ENCODE measurements at regions of chrX and their contacts with region 1.

Region 1: DNA sequence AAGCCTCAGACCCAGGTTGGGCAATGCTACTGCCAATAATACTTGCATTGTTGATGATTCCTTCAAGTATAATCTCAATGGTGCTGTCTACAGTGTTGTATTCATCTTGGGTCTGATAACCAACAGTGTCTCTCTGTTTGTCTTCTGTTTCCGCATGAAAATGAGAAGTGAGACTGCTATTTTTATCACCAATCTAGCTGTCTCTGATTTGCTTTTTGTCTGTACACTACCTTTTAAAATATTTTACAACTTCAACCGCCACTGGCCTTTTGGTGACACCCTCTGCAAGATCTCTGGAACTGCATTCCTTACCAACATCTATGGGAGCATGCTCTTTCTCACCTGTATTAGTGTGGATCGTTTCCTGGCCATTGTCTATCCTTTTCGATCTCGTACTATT is 7.4 kb downstream of the LPAR4 start:
- DNase-seq: no peak
- ATAC-seq: no peak
- H3K4me3 ChIP-seq: no peak overlapping the region
- H3K4me3 Mint-ChIP-seq: no peak overlapping the region
- H3K27ac ChIP-seq: no peak overlapping the region
- H3K27ac Mint-ChIP-seq: no peak overlapping the region
- H3K4me1 ChIP-seq: no peaks in the 10 kb centered on the region
- H3K4me1 Mint-ChIP-seq: peaks cover 0 to 4% (median 0%) of the 10 kb centered on the region in 7 donors
- H3K27me3 ChIP-seq: no peaks in the 10 kb centered on the region
- H3K27me3 Mint-ChIP-seq: no peaks in the 10 kb centered on the region

Region 2: DNA sequence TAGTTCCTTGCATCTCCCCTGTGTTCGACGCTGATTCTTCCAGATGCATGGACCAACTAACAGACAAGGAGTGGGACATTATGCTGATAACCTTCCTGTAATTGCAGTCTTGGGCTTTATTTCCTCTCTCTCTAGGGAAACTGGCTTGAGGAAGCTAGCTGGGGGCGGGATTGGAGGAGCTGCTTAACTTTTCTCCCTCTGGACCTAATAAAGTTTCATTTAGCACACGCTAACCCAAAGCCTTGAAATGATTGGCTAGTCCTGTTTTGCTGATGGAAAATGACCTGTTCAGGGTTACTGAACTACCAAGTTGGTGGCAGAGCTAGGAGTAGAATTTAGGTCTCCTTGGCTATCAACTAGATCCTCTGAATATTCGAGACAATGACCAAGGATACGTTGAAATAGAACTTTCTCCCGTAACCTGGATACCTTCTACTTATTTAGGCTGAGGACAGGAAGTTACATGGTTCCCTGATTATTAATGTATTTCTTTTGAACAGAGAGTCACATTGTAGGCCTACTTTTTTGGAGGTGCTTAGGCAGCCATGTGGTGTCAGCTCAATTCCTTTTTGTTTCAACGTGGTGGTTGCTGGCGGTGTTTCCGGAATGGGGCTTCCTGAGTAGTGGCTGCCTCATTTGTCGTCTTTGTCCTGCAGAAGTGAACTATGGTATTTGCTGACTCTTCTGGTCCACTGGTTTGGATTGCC is 648.8 kb before region 1 on chrX:
- CTCF ChIA-PET with region 1: no interaction called
- POLR2A ChIA-PET with region 1: no interaction called
- intact Hi-C with region 1: no loop called
- DNase-seq: peak in 7 of 9 donors; percentile 15 to 45 (median 40)
- ATAC-seq: no peak
- H3K4me3 ChIP-seq: peak overlapping the region; percentile 98
- H3K4me3 Mint-ChIP-seq: peak overlapping the region; percentile 89 to 99 (median 92)
- H3K27ac ChIP-seq: peak overlapping the region; percentile 97
- H3K27ac Mint-ChIP-seq: peak overlapping the region; percentile 68 to 97 (median 93)
- H3K4me1 ChIP-seq: peaks cover 26 to 29% of the 10 kb centered on the region in 2 donors
- H3K4me1 Mint-ChIP-seq: peaks cover 21 to 69% (median 59%) of the 10 kb centered on the region in 7 donors
- H3K27me3 ChIP-seq: no peaks in the 10 kb centered on the region
- H3K27me3 Mint-ChIP-seq: no peaks in the 10 kb centered on the region

Region 3: DNA sequence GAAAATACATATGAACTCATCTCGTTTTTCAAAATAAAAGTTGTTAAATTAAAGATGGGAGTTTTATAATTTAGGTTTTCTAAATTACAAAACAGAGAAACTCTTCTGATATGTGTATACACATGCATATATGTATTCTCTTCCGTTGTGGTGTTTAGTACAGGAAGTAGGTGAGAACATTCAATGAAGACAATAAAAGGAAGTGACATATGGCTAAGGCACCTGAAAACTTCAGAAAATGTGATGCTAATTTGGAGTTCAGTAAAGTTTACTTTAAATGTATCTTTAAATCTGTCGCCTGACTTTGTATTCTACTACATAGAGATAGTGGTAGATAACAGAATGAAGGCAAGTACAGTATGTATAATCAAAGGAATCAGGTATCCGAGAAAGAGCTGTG is 645.7 kb after region 1 on chrX:
- CTCF ChIA-PET with region 1: no interaction called
- POLR2A ChIA-PET with region 1: no interaction called
- intact Hi-C with region 1: loop called in 1 of 2 experiments (anchors 10 kb)
- DNase-seq: peak in 5 of 9 donors; percentile 15 to 54 (median 48)
- ATAC-seq: peak; percentile 50
- H3K4me3 ChIP-seq: no peak overlapping the region
- H3K4me3 Mint-ChIP-seq: peak overlapping the region in 9 of 10 donors; percentile 0 to 79 (median 44)
- H3K27ac ChIP-seq: no peak overlapping the region
- H3K27ac Mint-ChIP-seq: peak overlapping the region in 8 of 9 donors; percentile 47 to 94 (median 72)
- H3K4me1 ChIP-seq: no peaks in the 10 kb centered on the region
- H3K4me1 Mint-ChIP-seq: peaks cover 3 to 37% (median 21%) of the 10 kb centered on the region in 7 donors
- H3K27me3 ChIP-seq: no peaks in the 10 kb centered on the region
- H3K27me3 Mint-ChIP-seq: no peaks in the 10 kb centered on the region